ENCODE measurements at regions of chr2 and their contacts with region 1.

Region 1: DNA sequence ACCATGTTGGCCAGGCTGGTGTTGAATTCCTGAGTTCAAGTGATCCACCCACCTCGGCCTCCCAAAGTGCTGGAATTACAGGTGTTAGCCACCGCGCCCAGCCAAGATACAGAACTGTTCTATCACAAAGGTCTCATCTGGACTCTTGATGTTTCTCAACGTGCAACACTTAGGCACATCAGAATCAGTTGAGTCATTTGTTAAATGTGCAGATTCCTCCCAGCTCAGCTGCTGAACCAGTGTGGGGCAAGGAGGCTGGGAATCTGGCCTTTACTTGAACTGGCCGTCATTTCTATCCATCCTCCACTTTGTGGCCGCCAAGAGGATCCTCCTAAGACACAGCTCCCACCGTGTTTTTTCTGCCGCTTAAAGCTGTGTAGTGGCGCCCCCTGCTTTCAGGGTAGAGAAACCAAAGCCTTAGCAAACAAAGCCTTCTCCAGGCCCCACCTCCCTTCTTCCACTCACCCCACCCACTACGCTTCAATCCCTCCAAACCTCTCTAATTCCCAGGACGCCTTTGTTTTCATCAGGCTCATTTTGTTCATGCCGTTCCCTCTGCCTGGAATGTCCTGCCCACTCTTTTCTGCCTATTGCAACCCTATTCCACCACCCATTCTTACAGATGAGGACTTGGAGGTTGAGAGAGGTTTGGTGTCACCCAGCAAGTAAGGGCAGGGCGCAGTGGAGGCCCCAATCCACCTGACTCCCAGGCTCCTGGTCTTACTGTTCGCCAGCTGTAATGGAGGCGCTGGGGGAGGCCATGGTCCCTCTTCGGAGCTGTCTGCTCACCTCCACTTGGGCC is 776 bp upstream of the SPEG start:
- DNase-seq: peak; percentile 61
- H3K4me3 Mint-ChIP-seq: no peak overlapping the region
- H3K27ac Mint-ChIP-seq: no peak overlapping the region
- H3K4me1 Mint-ChIP-seq: peaks cover 4% of the 10 kb centered on the region
- H3K27me3 Mint-ChIP-seq: peaks cover 19% of the 10 kb centered on the region

Region 2: DNA sequence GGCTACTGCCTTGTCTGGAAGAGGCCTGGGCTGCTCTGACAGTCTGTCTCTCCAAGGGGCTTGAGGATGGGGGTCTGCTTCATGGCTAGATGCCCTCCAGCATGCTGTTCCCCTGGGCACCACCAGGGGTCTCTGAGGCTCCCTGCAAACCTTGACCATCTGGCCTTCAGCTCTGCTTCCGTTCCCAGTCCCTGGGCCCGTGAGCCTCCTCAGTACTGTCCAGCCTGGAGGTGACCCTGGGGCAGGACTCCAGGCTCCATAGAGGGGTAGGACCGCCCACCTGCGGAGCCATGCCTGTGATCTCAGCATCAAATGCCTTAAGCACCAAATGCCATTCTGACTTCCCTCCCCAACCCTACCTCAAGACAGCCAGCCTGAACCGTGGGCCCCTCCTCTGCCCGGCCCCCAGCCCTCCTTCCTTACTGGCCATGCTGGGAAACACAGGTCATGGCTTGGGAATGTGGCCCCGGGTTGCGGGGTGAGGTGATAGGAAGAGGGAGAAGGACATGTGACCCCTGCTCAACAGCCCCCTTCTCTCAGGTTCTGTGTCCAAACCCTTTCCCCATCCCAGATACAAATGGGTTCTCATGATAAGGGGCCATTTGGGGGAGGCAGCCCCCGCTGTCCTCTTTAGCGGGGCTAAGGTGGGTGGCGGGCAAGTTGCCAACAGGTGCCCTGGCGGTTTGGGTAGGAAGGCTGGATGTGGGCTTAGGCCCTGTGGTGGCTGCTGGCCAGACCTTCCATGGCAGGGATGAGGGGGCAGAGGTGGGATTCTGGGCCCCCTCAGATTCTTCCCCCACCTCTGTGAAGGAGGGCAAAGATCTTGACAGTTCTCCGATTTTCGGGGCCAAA is 25.8 kb after region 1 on chr2:
- CTCF ChIA-PET with region 1: no interaction called
- intact Hi-C with region 1: loop called (anchors 2 kb)
- DNase-seq: peak; percentile 55
- H3K4me3 Mint-ChIP-seq: no peak overlapping the region
- H3K27ac Mint-ChIP-seq: no peak overlapping the region
- H3K4me1 Mint-ChIP-seq: no peaks in the 10 kb centered on the region
- H3K27me3 Mint-ChIP-seq: no peaks in the 10 kb centered on the region